Left ventricle myocardium superior (tissue), 1 donor: ENCODE measurements at regions of chr1 and their contacts with region 1.

Region 1: GRCh38 chr1:85307987-85308832 is 31.8 kb upstream of the BCL10 start:
- DNase-seq: peak; percentile 93
- ATAC-seq: peak; percentile 99

Region 2: DNA sequence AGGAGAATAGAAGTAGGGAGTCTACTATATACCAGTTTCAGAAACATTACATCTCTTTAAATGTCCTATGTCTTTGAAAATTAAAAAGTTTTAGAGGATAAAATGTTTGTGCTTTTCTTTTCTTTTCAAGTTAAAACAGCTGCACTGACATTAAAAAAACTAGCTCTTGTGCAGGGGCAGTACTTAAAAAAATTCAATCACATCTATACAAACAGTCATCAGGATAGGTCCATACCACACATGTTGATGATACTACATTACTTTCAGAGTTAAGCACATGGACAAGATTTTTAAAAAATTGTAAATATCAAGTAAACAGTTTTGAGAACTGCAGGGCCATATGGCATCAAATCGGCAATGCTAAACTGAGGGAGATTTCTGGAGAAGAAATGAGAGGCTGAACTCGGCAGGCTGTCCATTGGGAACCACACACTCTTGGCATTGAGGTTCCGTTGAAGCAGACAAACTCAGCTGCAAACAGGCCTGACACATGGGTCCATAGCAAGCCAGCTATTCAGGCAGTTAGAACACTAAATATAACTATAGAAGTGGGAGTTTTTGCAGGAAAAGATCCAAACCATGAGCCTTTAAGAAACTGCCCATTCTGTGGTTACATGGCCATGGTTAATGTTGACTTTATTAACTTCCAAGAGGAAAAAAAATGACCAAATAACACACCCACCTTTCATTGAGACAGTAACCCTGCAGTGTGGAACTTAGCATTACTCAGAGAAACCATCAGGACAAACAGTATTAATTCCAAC is 52.7 kb after region 1 on chr1:
- intact Hi-C with region 1: no loop called
- DNase-seq: no peak
- ATAC-seq: peak; percentile 83

Region 3: DNA sequence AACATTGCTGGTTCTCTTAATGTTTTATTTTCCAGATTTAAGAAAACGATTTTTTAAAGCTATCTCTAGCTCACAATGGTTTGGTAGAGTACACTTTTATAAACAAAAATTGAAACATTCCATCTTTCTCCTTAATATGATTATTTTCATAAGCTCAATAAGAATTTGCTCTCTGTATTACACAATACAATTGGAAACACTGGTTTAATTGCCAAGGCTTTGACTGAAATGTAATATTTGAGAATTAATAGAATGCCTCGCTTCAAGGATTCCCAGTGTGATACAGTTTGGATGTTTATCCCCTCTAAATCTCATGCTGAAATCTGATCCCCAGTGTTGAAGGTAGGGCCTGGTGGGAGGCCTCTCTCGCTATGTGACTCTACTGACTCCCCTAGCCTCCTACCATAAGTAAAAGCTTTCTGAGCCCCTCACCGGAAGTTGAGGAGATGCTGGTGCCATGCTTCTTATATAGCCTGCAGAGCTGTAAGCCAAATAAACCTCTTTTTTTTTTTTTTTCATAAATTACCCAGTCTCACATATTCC is 89.4 kb after region 1 on chr1:
- intact Hi-C with region 1: loop called (anchors 2 kb)
- DNase-seq: no peak
- ATAC-seq: no peak

Region 4: GRCh38 chr1:85502625-85503083 is 194.4 kb after region 1 on chr1:
- intact Hi-C with region 1: loop called (anchors 5 kb)
- DNase-seq: no peak
- ATAC-seq: peak; percentile 94